Activated CD4-positive, alpha-beta T cell treated with anti-CD3 and anti-CD28 coated beads, Interleukin-2, amount 10 ng/mL, durations not matched to agents 24 days and 14 days (primary cell): ENCODE measurements at regions of chr2 and their contacts with region 1.

Region 1: DNA sequence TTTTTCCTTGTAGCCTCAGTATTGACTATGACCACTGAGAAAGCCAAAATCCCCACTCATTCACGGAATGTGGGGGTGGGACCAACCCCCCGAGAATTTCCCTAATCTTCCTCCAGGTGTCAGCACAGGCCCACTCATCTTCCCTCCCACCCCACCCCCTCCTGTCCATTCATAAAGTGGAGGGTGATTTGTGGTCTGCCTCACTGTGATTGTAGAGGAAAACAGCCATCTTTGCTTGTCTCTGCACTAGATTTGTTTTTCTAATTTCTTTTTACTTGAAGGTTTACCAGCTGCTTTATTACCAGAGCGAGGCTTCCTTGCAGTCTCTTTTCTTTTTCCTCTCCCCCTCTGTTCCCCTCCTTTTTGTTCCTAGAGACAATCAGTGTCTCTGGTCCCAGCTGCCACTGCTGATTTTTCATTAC is 171.8 kb downstream of the ICOS start:
- DNase-seq: peak; percentile 81
- H3K4me3 Mint-ChIP-seq: peak overlapping the region; percentile 75
- H3K27ac Mint-ChIP-seq: peak overlapping the region; percentile 93
- H3K4me1 Mint-ChIP-seq: peaks cover 64% of the 10 kb centered on the region
- H3K27me3 Mint-ChIP-seq: no peaks in the 10 kb centered on the region

Region 2: GRCh38 chr2:203578759-203579643 is 529.3 kb before region 1 on chr2:
- intact Hi-C with region 1: loop called (anchors 2 kb)
- DNase-seq: peak; percentile 87
- H3K4me3 Mint-ChIP-seq: peak overlapping the region; percentile 37
- H3K27ac Mint-ChIP-seq: peak overlapping the region; percentile 59
- H3K4me1 Mint-ChIP-seq: peaks cover 28% of the 10 kb centered on the region
- H3K27me3 Mint-ChIP-seq: peaks cover 37% of the 10 kb centered on the region

Region 3: GRCh38 chr2:203830304-203831055 is 277.9 kb before region 1 on chr2:
- intact Hi-C with region 1: loop called (anchors 5 kb)
- DNase-seq: peak; percentile 81
- H3K4me3 Mint-ChIP-seq: peak overlapping the region; percentile 53
- H3K27ac Mint-ChIP-seq: peak overlapping the region; percentile 93
- H3K4me1 Mint-ChIP-seq: peaks cover 21% of the 10 kb centered on the region
- H3K27me3 Mint-ChIP-seq: no peaks in the 10 kb centered on the region

Region 4: GRCh38 chr2:203997980-203998809 is 110.1 kb before region 1 on chr2:
- intact Hi-C with region 1: loop called (anchors 2 kb)
- DNase-seq: peak; percentile 57
- H3K4me3 Mint-ChIP-seq: peak overlapping the region; percentile 55
- H3K27ac Mint-ChIP-seq: peak overlapping the region; percentile 69
- H3K4me1 Mint-ChIP-seq: peaks cover 72% of the 10 kb centered on the region
- H3K27me3 Mint-ChIP-seq: no peaks in the 10 kb centered on the region

Region 5: DNA sequence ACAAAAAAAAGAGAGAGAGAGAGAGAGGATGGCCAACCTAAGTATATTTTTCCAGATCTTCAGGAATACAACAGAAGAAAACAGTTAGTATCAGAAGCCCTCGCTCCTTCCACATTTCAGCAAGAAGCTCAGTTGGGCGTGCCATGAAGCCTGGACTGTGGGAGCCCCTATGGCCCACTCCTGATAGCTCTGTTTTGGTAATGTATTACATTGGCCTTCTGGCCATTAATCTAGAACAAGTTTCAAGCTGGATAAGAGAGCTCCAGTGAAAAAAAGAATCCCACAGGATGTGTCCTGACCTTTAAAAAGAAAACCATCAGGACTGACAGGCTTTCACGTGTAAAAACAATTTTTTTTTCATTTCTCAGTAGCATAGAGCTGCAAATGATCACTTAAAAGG is 26.1 kb after region 1 on chr2:
- intact Hi-C with region 1: no loop called
- DNase-seq: no peak
- H3K4me3 Mint-ChIP-seq: no peak overlapping the region
- H3K27ac Mint-ChIP-seq: no peak overlapping the region
- H3K4me1 Mint-ChIP-seq: peaks cover 4% of the 10 kb centered on the region
- H3K27me3 Mint-ChIP-seq: peaks cover 3% of the 10 kb centered on the region

Region 6: GRCh38 chr2:204145263-204145751 is 37.0 kb after region 1 on chr2:
- intact Hi-C with region 1: loop called (anchors 2 kb)
- DNase-seq: peak; percentile 94
- H3K4me3 Mint-ChIP-seq: peak overlapping the region; percentile 86
- H3K27ac Mint-ChIP-seq: peak overlapping the region; percentile 26
- H3K4me1 Mint-ChIP-seq: peaks cover 15% of the 10 kb centered on the region
- H3K27me3 Mint-ChIP-seq: peaks cover 35% of the 10 kb centered on the region

Region 7: DNA sequence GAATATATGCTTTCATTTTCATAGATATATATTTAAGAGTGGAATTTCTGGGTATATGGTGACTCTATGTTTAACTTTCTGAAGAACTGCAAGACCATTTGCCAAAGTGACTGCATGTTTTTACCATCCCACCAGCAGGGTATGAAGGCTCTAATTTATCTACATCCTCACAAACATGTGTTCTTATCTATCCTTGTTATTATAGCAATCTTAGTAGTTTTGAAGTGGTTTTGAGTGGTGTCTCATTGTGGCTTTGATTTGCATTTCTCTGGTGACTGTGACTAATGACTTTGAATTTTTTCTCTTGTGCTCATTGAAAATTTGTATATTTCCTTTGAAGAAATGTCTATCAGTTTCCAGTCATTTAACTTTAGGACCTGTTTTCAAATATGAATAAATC is 1263.8 kb after region 1 on chr2:
- intact Hi-C with region 1: loop called (anchors 10 kb)
- DNase-seq: no peak
- H3K4me3 Mint-ChIP-seq: no peak overlapping the region
- H3K27ac Mint-ChIP-seq: no peak overlapping the region
- H3K4me1 Mint-ChIP-seq: peaks cover 2% of the 10 kb centered on the region
- H3K27me3 Mint-ChIP-seq: peaks cover 4% of the 10 kb centered on the region

Region 8: GRCh38 chr2:205714058-205714776 is 1605.9 kb after region 1 on chr2:
- intact Hi-C with region 1: loop called (anchors 2 kb)
- DNase-seq: peak; percentile 60
- H3K4me3 Mint-ChIP-seq: peak overlapping the region; percentile 32
- H3K27ac Mint-ChIP-seq: peak overlapping the region; percentile 67
- H3K4me1 Mint-ChIP-seq: peaks cover 62% of the 10 kb centered on the region
- H3K27me3 Mint-ChIP-seq: no peaks in the 10 kb centered on the region